ENCODE measurements at regions of chr1 and their contacts with region 1.

Region 1: GRCh38 chr1:32612189-32612881 is 38.0 kb downstream of the ZBTB8OS start:
- DNase-seq: peak; percentile 87 to 90
- H3K4me3 ChIP-seq: peak overlapping the region; percentile 46
- H3K4me3 Mint-ChIP-seq: peak overlapping the region; percentile 68
- H3K27ac Mint-ChIP-seq: peak overlapping the region; percentile 59
- H3K4me1 ChIP-seq: no peaks in the 10 kb centered on the region
- H3K4me1 Mint-ChIP-seq: peaks cover 7% of the 10 kb centered on the region
- H3K27me3 ChIP-seq: no peaks in the 10 kb centered on the region
- H3K27me3 Mint-ChIP-seq: no peaks in the 10 kb centered on the region
- CTCF ChIP-seq: peak; percentile 13 to 21

Region 2: GRCh38 chr1:32521165-32521564 is 91.2 kb before region 1 on chr1:
- CTCF ChIA-PET with region 1: interaction called, 8 read pairs
- POLR2A ChIA-PET with region 1: no interaction called
- intact Hi-C with region 1: loop called (anchors 10 kb)
- DNase-seq: no peak
- H3K4me3 ChIP-seq: no peak overlapping the region
- H3K4me3 Mint-ChIP-seq: peak overlapping the region; percentile 65
- H3K27ac Mint-ChIP-seq: no peak overlapping the region
- H3K4me1 ChIP-seq: no peaks in the 10 kb centered on the region
- H3K4me1 Mint-ChIP-seq: peaks cover 6% of the 10 kb centered on the region
- H3K27me3 ChIP-seq: no peaks in the 10 kb centered on the region
- H3K27me3 Mint-ChIP-seq: no peaks in the 10 kb centered on the region
- CTCF ChIP-seq: no peak

Region 3: GRCh38 chr1:32636914-32637645 is 24.7 kb after region 1 on chr1:
- CTCF ChIA-PET with region 1: no interaction called
- POLR2A ChIA-PET with region 1: no interaction called
- intact Hi-C with region 1: no loop called
- DNase-seq: peak; percentile 12 to 36
- H3K4me3 ChIP-seq: no peak overlapping the region
- H3K4me3 Mint-ChIP-seq: no peak overlapping the region
- H3K27ac Mint-ChIP-seq: no peak overlapping the region
- H3K4me1 ChIP-seq: no peaks in the 10 kb centered on the region
- H3K4me1 Mint-ChIP-seq: peaks cover 16% of the 10 kb centered on the region
- H3K27me3 ChIP-seq: no peaks in the 10 kb centered on the region
- H3K27me3 Mint-ChIP-seq: no peaks in the 10 kb centered on the region
- CTCF ChIP-seq: no peak